CD8-positive, alpha-beta T cell (primary cell): ENCODE measurements at regions of chr3 and their contacts with region 1.

Region 1: GRCh38 chr3:157174649-157175498 is 14.9 kb upstream of the CCNL1 start:
- DNase-seq: peak; percentile 94 to 100 (median 98)
- ATAC-seq: peak; percentile 91
- H3K4me3 ChIP-seq: peak overlapping the region; percentile 73 to 89
- H3K4me3 Mint-ChIP-seq: peak overlapping the region; percentile 92
- H3K27ac ChIP-seq: peak overlapping the region; percentile 96 to 98
- H3K27ac Mint-ChIP-seq: peak overlapping the region; percentile 99
- H3K4me1 ChIP-seq: peaks cover 25% of the 10 kb centered on the region
- H3K4me1 Mint-ChIP-seq: peaks cover 30% of the 10 kb centered on the region
- H3K27me3 ChIP-seq: no peaks in the 10 kb centered on the region
- H3K27me3 Mint-ChIP-seq: no peaks in the 10 kb centered on the region
- CTCF ChIP-seq: no peak

Region 2: DNA sequence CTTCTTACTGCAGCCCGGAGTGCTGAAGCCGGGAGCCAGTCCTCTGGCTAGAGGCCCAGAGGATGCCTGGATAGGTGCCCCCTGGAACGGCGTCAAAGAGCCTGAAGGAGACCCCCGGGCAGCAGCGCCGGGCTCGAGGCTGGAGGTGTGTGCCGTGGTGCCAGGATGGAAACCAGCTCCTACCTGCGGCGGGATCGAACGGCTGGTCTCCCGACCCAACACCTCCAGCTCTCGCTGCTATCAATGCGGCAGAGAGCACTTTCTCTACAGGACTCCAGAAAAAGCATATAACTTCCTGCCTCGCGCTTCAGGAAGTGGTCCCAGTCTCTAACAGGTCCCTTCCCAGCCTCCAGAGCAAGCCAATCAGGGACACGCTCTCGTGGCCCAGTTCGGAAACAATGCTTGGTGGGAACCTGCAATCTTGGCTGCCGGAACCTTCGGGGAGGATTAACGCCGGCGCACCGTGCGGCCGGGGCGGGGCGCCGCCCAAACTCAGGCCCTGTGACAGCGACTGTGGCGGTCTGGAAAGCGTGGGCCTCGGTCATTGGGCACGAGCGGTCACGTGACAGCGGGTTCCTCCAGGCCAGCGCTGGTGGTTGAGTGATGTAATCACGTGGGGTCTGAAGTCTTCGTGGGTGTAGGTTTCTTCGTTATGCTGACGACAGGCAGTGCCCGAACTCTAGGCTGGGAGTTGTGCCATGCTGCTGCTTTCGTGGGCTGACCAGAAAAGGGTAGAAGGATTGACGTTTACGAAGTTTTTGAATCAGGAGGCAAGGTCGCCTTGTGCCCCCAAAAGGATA is 1320.5 kb before region 1 on chr3 and contains the start of gene SLC33A1:
- CTCF ChIA-PET with region 1: no interaction called
- POLR2A ChIA-PET with region 1: no interaction called
- intact Hi-C with region 1: loop called (anchors 1 to 5 kb)
- DNase-seq: peak; percentile 96 to 100 (median 99)
- ATAC-seq: peak; percentile 89
- H3K4me3 ChIP-seq: peak within 1 kb of the TSS; percentile 85 to 92
- H3K4me3 Mint-ChIP-seq: peak within 1 kb of the TSS; percentile 98
- H3K27ac ChIP-seq: peak within 1 kb of the TSS; percentile 90 to 95
- H3K27ac Mint-ChIP-seq: peak within 1 kb of the TSS; percentile 99
- H3K4me1 ChIP-seq: peaks cover 33% of the 10 kb centered on the region
- H3K4me1 Mint-ChIP-seq: peaks cover 39% of the 10 kb centered on the region
- H3K27me3 ChIP-seq: no peaks in the 10 kb centered on the region
- H3K27me3 Mint-ChIP-seq: no peaks in the 10 kb centered on the region
- CTCF ChIP-seq: no peak
- total RNA-seq, gene SLC33A1: 12.6 to 12.9 TPM

Region 3: DNA sequence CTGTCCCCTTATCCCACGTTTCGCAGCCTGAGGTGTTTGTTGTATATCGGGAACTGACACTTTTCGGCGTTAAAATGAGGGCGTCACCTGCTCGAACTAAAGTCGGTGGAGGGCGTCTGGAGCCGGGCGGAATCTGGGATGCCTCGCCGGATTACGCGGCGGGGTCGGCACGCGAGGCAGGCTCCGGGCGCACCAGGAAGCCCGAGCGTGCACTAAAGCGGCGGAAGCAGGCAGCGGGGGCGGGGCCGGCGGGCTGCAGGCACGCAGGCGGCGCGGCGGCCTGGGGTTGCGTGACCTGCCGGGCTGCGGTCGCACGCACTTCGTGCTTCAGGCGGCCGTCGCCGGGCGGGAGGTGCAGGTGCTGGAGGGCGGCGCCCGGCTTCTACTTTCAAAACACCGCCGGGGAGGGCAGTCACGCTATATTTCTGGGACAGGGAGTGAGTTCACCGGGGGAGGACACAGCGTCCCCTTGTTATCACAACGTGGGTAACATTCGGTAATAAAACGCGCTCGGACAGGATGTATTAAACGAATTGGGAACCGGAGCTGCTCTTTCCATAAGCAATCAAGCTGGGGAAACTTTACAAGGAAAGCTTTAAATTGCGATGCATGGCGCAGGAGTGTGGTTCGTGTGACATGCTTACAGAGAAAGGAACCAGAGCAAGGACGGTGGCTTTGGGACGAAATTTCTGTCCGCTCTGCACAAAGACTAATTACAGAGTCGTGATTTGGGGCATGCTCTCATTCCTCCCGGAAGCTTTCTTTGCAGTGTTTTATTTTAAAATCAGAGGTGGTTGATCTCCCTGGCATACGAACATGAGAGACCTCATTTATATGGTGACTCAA is 357.9 kb before region 1 on chr3:
- CTCF ChIA-PET with region 1: no interaction called
- POLR2A ChIA-PET with region 1: interaction called, 13 read pairs
- intact Hi-C with region 1: loop called in 1 of 2 experiments (anchors 5 kb)
- DNase-seq: peak; percentile 53 to 95 (median 85)
- ATAC-seq: peak; percentile 80
- H3K4me3 ChIP-seq: peak overlapping the region; percentile 75 to 88
- H3K4me3 Mint-ChIP-seq: peak overlapping the region; percentile 95
- H3K27ac ChIP-seq: peak overlapping the region; percentile 73 to 78
- H3K27ac Mint-ChIP-seq: peak overlapping the region; percentile 95
- H3K4me1 ChIP-seq: peaks cover 18% of the 10 kb centered on the region
- H3K4me1 Mint-ChIP-seq: peaks cover 38% of the 10 kb centered on the region
- H3K27me3 ChIP-seq: no peaks in the 10 kb centered on the region
- H3K27me3 Mint-ChIP-seq: no peaks in the 10 kb centered on the region
- CTCF ChIP-seq: no peak

Region 4: GRCh38 chr3:157201648-157202278 is 26.9 kb after region 1 on chr3:
- CTCF ChIA-PET with region 1: interaction called, 7 read pairs
- POLR2A ChIA-PET with region 1: interaction called, 6 read pairs
- intact Hi-C with region 1: loop called in 1 of 2 experiments (anchors 1 kb)
- DNase-seq: peak in 2 of 9 experiments; percentile 44 to 59
- ATAC-seq: no peak
- H3K4me3 ChIP-seq: no peak overlapping the region
- H3K4me3 Mint-ChIP-seq: no peak overlapping the region
- H3K27ac ChIP-seq: no peak overlapping the region
- H3K27ac Mint-ChIP-seq: no peak overlapping the region
- H3K4me1 ChIP-seq: no peaks in the 10 kb centered on the region
- H3K4me1 Mint-ChIP-seq: no peaks in the 10 kb centered on the region
- H3K27me3 ChIP-seq: no peaks in the 10 kb centered on the region
- H3K27me3 Mint-ChIP-seq: no peaks in the 10 kb centered on the region
- CTCF ChIP-seq: no peak

Region 5: GRCh38 chr3:157239082-157239704 is 64.3 kb after region 1 on chr3:
- CTCF ChIA-PET with region 1: interaction called, 8 read pairs
- POLR2A ChIA-PET with region 1: interaction called, 3 read pairs
- intact Hi-C with region 1: loop called (anchors 1 kb)
- DNase-seq: peak; percentile 49 to 80 (median 72)
- ATAC-seq: peak; percentile 100
- H3K4me3 ChIP-seq: no peak overlapping the region
- H3K4me3 Mint-ChIP-seq: no peak overlapping the region
- H3K27ac ChIP-seq: no peak overlapping the region
- H3K27ac Mint-ChIP-seq: no peak overlapping the region
- H3K4me1 ChIP-seq: no peaks in the 10 kb centered on the region
- H3K4me1 Mint-ChIP-seq: peaks cover 4% of the 10 kb centered on the region
- H3K27me3 ChIP-seq: no peaks in the 10 kb centered on the region
- H3K27me3 Mint-ChIP-seq: no peaks in the 10 kb centered on the region
- CTCF ChIP-seq: peak; percentile 73